A673 (cell line): ENCODE measurements at regions of chr16 and their contacts with region 1.

Region 1: GRCh38 chr16:21244518-21245215 is 11.2 kb downstream of the ANKS4B start:
- DNase-seq: no peak
- H3K4me3 ChIP-seq: no peak overlapping the region
- H3K27ac ChIP-seq: no peak overlapping the region
- H3K4me1 ChIP-seq: no peaks in the 10 kb centered on the region
- H3K27me3 ChIP-seq: peaks cover 36% of the 10 kb centered on the region
- CTCF ChIP-seq: no peak

Region 2: GRCh38 chr16:22050963-22051362 is 806.3 kb after region 1 on chr16:
- CTCF ChIA-PET with region 1: no interaction called
- POLR2A ChIA-PET with region 1: interaction called, 11 read pairs
- intact Hi-C with region 1: no loop called
- DNase-seq: no peak
- H3K4me3 ChIP-seq: no peak overlapping the region
- H3K27ac ChIP-seq: no peak overlapping the region
- H3K4me1 ChIP-seq: no peaks in the 10 kb centered on the region
- H3K27me3 ChIP-seq: no peaks in the 10 kb centered on the region
- CTCF ChIP-seq: no peak